GM12878 (cell line): ENCODE measurements at regions of chr10 and their contacts with region 1.

Region 1: DNA sequence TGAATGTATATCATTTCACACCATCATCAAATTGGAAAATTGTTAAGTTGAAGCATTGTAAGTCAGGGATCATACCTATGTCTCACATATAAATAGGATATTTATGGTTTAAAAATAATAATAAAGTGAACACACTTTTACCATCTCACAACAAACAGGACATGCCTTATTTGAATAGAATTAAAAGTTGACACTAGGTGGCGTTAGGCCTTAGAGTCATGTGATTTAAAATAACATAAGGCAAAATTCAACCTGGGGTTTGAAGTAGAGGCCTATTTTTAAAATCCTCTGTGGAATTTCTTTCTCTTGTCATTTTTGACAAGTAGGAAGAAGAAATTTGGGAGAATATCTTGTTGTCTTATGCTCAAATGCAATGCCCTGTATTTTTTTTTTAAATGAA is 184.7 kb upstream of the PCDH15 start:
- DNase-seq: no peak
- ATAC-seq: peak; percentile 71
- H3K4me3 ChIP-seq: no peak overlapping the region
- H3K27ac ChIP-seq: no peak overlapping the region
- H3K4me1 ChIP-seq: no peaks in the 10 kb centered on the region
- H3K27me3 ChIP-seq: no peaks in the 10 kb centered on the region
- CTCF ChIP-seq: peak; percentile 7 to 48 (median 31); a peak in 5 of 6 replicates
- EP300 ChIP-seq: no peak
- POLR2A ChIP-seq: no peak
- RAD21 ChIP-seq: no peak

Region 2: DNA sequence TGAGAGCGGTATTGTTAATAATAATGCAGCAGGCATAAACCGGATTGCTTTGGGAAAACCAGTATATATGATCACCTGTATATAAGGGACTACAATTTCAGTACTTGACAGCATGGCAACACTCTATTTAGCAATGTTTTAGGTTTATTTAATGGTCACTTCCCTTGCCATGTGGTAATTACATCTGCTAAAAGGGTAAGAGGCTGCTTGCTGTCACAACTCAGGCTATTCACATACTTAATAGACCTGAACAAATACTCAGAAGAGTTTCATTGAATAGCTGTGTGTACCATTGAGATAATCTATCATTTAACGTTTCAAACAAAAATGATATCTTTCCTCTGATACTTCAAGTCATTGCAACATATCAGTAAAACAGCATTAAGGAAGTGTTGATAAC is 274.8 kb before region 1 on chr10:
- CTCF ChIA-PET with region 1: no interaction called
- POLR2A ChIA-PET with region 1: no interaction called
- RAD21 ChIA-PET with region 1: no interaction called
- SMC1A ChIA-PET with region 1: no interaction called
- in situ Hi-C with region 1: no loop called
- intact Hi-C with region 1: no loop called
- DNase-seq: no peak
- ATAC-seq: no peak
- H3K4me3 ChIP-seq: no peak overlapping the region
- H3K27ac ChIP-seq: no peak overlapping the region
- H3K4me1 ChIP-seq: no peaks in the 10 kb centered on the region
- H3K27me3 ChIP-seq: no peaks in the 10 kb centered on the region
- CTCF ChIP-seq: no peak
- EP300 ChIP-seq: no peak
- POLR2A ChIP-seq: no peak
- RAD21 ChIP-seq: no peak

Region 3: GRCh38 chr10:55263327-55263726 is 277.6 kb after region 1 on chr10:
- CTCF ChIA-PET with region 1: no interaction called
- POLR2A ChIA-PET with region 1: no interaction called
- RAD21 ChIA-PET with region 1: no interaction called
- SMC1A ChIA-PET with region 1: no interaction called
- in situ Hi-C with region 1: no loop called
- intact Hi-C with region 1: loop called (anchors 5 kb)
- DNase-seq: no peak
- ATAC-seq: peak; percentile 17; the same call in 1 of the 3 replicates
- H3K4me3 ChIP-seq: no peak overlapping the region
- H3K27ac ChIP-seq: no peak overlapping the region
- H3K4me1 ChIP-seq: no peaks in the 10 kb centered on the region
- H3K27me3 ChIP-seq: 0 out of 4 replicates have a peak, but pooled peaks cover 0 to 2% of the 10 kb centered on the region in 2 experiments
- CTCF ChIP-seq: no peak
- EP300 ChIP-seq: no peak
- POLR2A ChIP-seq: no peak
- RAD21 ChIP-seq: no peak